ENCODE measurements at regions of chr16 and their contacts with region 1.

Region 1: DNA sequence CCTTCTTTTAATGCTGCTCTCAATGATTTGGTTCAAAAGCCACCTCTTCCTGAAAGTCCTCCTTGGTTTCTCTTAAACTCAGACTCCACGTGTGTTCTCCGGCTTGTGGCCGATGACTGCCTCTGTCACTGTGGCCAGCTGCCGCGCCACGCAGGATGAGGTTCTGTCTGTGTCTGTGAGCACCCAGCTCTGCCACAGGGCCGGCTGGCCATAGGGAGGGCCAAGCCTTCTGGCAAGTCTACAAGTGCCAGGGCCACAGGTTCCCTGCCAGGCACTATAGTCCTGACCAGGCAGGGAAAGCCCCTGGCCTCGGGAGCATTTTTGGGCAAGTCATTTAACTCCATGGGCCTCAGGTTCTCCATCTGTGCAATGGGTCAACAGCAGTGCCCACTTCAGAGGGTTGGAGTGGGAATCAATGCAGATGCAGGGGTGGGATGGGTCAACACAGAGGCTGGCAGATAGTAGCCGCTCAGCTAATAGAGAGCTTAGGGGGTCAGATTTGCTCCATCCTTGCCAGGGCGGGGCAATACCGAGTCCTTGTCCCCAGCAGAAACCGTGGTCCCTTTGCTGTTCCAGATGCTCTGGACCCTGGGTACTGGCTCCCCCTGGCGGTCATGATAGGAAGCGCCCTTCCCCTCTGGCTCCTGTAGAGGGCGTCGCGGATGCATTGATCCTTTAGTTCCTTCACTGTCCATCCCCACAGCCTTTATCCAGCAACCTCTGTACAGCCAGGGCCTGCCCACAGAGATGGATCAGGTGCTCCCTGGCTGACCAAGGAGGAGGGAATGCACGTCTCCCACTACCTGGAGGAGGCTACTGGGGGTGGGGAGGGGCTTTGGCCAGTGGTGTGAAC is 19.3 kb upstream of the ADGRG3 start:
- DNase-seq: peak; percentile 87
- ATAC-seq: peak; percentile 90
- H3K4me3 Mint-ChIP-seq: no peak overlapping the region
- H3K27ac Mint-ChIP-seq: 0 out of 2 replicates have a peak overlapping the region, but pooled peaks have one; percentile 53
- H3K4me1 Mint-ChIP-seq: 0 out of 2 replicates have a peak, but pooled peaks cover 2% of the 10 kb centered on the region
- H3K27me3 Mint-ChIP-seq: no peaks in the 10 kb centered on the region; the same call in 1 of the 2 replicates
- CTCF ChIP-seq: peak; percentile 100

Region 2: GRCh38 chr16:57568173-57568678 is 80.6 kb before region 1 on chr16:
- CTCF ChIA-PET with region 1: no interaction called
- POLR2A ChIA-PET with region 1: no interaction called
- DNase-seq: no peak
- ATAC-seq: no peak
- H3K4me3 Mint-ChIP-seq: no peak overlapping the region
- H3K27ac Mint-ChIP-seq: no peak overlapping the region
- H3K4me1 Mint-ChIP-seq: no peaks in the 10 kb centered on the region
- H3K27me3 Mint-ChIP-seq: no peaks in the 10 kb centered on the region
- CTCF ChIP-seq: no peak

Region 3: GRCh38 chr16:57591086-57591869 is 57.5 kb before region 1 on chr16:
- CTCF ChIA-PET with region 1: interaction called, 53 read pairs
- POLR2A ChIA-PET with region 1: no interaction called
- DNase-seq: peak; percentile 83
- ATAC-seq: peak; percentile 99
- H3K4me3 Mint-ChIP-seq: no peak overlapping the region
- H3K27ac Mint-ChIP-seq: no peak overlapping the region
- H3K4me1 Mint-ChIP-seq: 0 out of 2 replicates have a peak, but pooled peaks cover 3% of the 10 kb centered on the region
- H3K27me3 Mint-ChIP-seq: peaks cover 28% of the 10 kb centered on the region
- CTCF ChIP-seq: peak; percentile 94

Region 4: GRCh38 chr16:57600048-57600835 is 48.6 kb before region 1 on chr16:
- CTCF ChIA-PET with region 1: interaction called, 35 read pairs
- POLR2A ChIA-PET with region 1: no interaction called
- DNase-seq: peak; percentile 84
- ATAC-seq: peak; percentile 99
- H3K4me3 Mint-ChIP-seq: no peak overlapping the region
- H3K27ac Mint-ChIP-seq: no peak overlapping the region
- H3K4me1 Mint-ChIP-seq: no peaks in the 10 kb centered on the region
- H3K27me3 Mint-ChIP-seq: peaks cover 7% of the 10 kb centered on the region; the same call in 1 of the 2 replicates
- CTCF ChIP-seq: peak; percentile 77

Region 5: DNA sequence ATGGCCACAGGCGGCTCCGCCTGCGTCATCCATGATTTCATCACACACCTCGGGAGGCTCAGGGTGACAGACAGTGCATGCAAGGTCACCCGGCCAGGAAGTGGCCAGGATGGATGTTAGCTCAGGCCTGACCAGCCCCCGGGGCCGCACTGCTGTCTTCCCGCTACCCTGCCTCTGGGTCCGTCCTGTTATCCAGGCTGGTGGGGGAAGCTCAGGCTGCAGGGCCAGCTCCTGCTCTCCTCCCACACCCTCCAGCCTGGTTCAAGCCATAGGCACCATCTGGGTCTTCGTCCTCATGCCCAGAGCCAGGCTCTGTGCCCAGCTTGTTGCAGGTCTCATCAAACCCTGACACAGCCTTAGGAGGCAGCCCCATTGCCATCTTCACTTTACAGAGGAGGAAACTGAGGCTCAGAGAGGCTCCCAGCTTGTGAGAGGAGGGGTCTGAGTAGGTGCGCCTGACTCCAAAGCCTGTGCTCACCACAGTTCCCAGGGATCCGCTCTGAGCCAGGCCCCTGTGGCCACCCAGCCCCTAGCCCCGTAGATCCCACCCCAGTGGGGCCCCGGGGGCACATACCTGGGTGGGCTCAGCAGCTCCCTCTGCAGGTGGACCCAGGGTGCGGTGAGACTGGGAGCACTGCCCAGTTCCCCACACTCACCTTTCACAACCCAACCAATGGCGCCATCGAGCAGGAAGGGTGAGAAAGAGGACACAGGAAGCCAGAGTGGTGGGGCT is 18.9 kb after region 1 on chr16:
- CTCF ChIA-PET with region 1: interaction called, 15 read pairs
- POLR2A ChIA-PET with region 1: no interaction called
- DNase-seq: peak; percentile 66
- ATAC-seq: peak; percentile 66
- H3K4me3 Mint-ChIP-seq: no peak overlapping the region
- H3K27ac Mint-ChIP-seq: no peak overlapping the region
- H3K4me1 Mint-ChIP-seq: no peaks in the 10 kb centered on the region
- H3K27me3 Mint-ChIP-seq: no peaks in the 10 kb centered on the region
- CTCF ChIP-seq: 0 out of 2 replicates have a peak, but pooled peaks have one; percentile 28

Measured in WTC11 (cell line).